ENCODE measurements at regions of chr22 and their contacts with region 1.

Region 1: DNA sequence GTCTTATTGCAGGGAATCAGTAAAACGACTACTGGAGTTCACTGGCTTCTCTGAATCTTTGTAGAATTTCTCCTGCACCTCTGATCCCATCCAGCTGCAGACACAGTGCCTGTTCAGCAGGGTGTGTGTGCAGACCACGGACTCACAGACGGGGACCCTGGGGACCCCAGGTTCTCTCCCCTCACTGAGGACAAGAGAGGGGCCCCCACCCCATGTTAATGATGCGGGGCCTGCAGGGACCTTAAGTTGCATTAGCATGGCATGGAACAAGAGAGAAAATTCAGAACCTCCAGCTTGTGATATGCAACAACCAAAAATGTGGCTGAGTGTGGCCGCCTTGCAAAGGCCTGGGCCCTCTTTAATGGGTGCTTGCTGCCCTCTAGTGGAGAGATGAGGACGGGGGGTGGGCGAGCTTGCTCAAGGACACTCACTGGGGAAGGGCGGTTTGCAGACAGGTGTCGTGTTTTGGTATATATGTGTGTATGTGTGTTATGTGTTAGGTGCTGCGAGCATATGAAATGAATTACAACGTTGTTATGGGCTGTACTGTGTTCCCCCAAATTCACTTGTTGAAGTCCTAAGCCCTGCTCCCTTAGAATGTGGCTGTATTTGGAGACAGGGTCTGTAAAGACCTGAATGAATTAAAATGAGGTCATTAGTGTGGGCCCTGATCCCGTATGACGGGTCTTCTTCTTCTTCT is 84.4 kb upstream of the SEPTIN5 start:
- DNase-seq: peak; percentile 74
- ATAC-seq: peak; percentile 94
- H3K4me3 Mint-ChIP-seq: no peak overlapping the region
- H3K27ac Mint-ChIP-seq: no peak overlapping the region
- H3K4me1 Mint-ChIP-seq: no peaks in the 10 kb centered on the region
- H3K27me3 Mint-ChIP-seq: peaks cover 24% of the 10 kb centered on the region
- CTCF ChIP-seq: peak; percentile 78

Region 2: GRCh38 chr22:18987765-18988164 is 642.1 kb before region 1 on chr22:
- CTCF ChIA-PET with region 1: no interaction called
- POLR2A ChIA-PET with region 1: no interaction called
- intact Hi-C with region 1: no loop called
- DNase-seq: no peak
- ATAC-seq: no peak
- H3K4me3 Mint-ChIP-seq: no peak overlapping the region
- H3K27ac Mint-ChIP-seq: no peak overlapping the region
- H3K4me1 Mint-ChIP-seq: no peaks in the 10 kb centered on the region
- H3K27me3 Mint-ChIP-seq: peaks cover 8% of the 10 kb centered on the region
- CTCF ChIP-seq: no peak

Region 3: GRCh38 chr22:19109198-19110067 is 520.4 kb before region 1 on chr22:
- CTCF ChIA-PET with region 1: no interaction called
- POLR2A ChIA-PET with region 1: no interaction called
- intact Hi-C with region 1: loop called (anchors 1 kb)
- DNase-seq: no peak
- ATAC-seq: peak; percentile 95
- H3K4me3 Mint-ChIP-seq: peak overlapping the region; percentile 67
- H3K27ac Mint-ChIP-seq: peak overlapping the region; percentile 85
- H3K4me1 Mint-ChIP-seq: peaks cover 60% of the 10 kb centered on the region
- H3K27me3 Mint-ChIP-seq: no peaks in the 10 kb centered on the region
- CTCF ChIP-seq: no peak

Region 4: DNA sequence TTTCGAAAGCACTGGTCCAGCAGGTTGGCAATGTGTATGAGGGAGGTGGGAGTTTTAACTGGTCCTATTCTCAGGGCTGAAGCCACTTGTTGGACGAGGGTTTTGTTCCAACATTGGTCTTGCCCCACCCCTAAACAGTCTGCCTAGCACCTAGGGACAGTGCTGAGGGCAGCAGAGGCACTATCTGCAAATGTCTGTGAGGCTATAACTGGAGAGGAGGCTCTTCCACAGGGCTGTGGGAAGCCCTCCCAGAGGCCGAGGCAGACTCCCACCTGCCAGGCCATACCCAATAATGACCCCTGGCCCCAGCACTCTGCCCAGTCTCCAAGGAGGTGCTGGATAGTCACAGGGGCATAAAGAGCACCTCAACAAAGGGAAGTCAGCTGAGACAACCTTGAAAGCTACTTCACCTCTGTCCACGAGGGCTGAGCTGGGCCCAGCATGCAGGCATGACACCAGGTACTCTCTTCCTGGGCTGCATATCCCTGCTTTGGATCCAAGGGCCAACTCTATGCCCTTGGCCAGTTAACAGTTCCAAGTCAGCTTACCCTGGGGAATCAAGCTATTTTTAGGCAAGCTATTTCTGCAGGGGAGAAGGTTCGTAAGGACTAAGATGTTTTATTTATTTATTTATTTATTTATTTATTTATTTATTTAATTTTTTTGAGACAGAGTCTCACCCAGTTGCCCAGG is 411.2 kb before region 1 on chr22:
- CTCF ChIA-PET with region 1: interaction called, 18 read pairs
- POLR2A ChIA-PET with region 1: no interaction called
- intact Hi-C with region 1: loop called (anchors 1 kb)
- DNase-seq: no peak
- ATAC-seq: no peak
- H3K4me3 Mint-ChIP-seq: no peak overlapping the region
- H3K27ac Mint-ChIP-seq: no peak overlapping the region
- H3K4me1 Mint-ChIP-seq: peaks cover 4% of the 10 kb centered on the region
- H3K27me3 Mint-ChIP-seq: peaks cover 2% of the 10 kb centered on the region
- CTCF ChIP-seq: no peak

Region 5: GRCh38 chr22:19271856-19272535 is 357.9 kb before region 1 on chr22:
- CTCF ChIA-PET with region 1: no interaction called
- POLR2A ChIA-PET with region 1: no interaction called
- intact Hi-C with region 1: loop called (anchors 1 kb)
- DNase-seq: no peak
- ATAC-seq: no peak
- H3K4me3 Mint-ChIP-seq: no peak overlapping the region
- H3K27ac Mint-ChIP-seq: no peak overlapping the region
- H3K4me1 Mint-ChIP-seq: no peaks in the 10 kb centered on the region
- H3K27me3 Mint-ChIP-seq: peaks cover 3% of the 10 kb centered on the region
- CTCF ChIP-seq: no peak

Region 6: GRCh38 chr22:19394274-19395050 is 235.4 kb before region 1 on chr22:
- CTCF ChIA-PET with region 1: interaction called, 5 read pairs
- POLR2A ChIA-PET with region 1: no interaction called
- intact Hi-C with region 1: loop called (anchors 5 kb)
- DNase-seq: no peak
- ATAC-seq: no peak
- H3K4me3 Mint-ChIP-seq: no peak overlapping the region
- H3K27ac Mint-ChIP-seq: no peak overlapping the region
- H3K4me1 Mint-ChIP-seq: no peaks in the 10 kb centered on the region
- H3K27me3 Mint-ChIP-seq: no peaks in the 10 kb centered on the region
- CTCF ChIP-seq: no peak

Region 7: GRCh38 chr22:19432133-19432851 is 197.6 kb before region 1 on chr22 and contains the start of gene MRPL40:
- CTCF ChIA-PET with region 1: no interaction called
- POLR2A ChIA-PET with region 1: interaction called, 6 read pairs
- intact Hi-C with region 1: loop called (anchors 5 kb)
- DNase-seq: peak; percentile 83
- ATAC-seq: peak; percentile 87
- H3K4me3 Mint-ChIP-seq: peak within 1 kb of the TSS; percentile 90
- H3K27ac Mint-ChIP-seq: peak within 1 kb of the TSS; percentile 91
- H3K4me1 Mint-ChIP-seq: peaks cover 59% of the 10 kb centered on the region
- H3K27me3 Mint-ChIP-seq: no peaks in the 10 kb centered on the region
- CTCF ChIP-seq: no peak
- total RNA-seq, gene MRPL40: 24.0 and 24.3 TPM in 2 replicates

Region 8: DNA sequence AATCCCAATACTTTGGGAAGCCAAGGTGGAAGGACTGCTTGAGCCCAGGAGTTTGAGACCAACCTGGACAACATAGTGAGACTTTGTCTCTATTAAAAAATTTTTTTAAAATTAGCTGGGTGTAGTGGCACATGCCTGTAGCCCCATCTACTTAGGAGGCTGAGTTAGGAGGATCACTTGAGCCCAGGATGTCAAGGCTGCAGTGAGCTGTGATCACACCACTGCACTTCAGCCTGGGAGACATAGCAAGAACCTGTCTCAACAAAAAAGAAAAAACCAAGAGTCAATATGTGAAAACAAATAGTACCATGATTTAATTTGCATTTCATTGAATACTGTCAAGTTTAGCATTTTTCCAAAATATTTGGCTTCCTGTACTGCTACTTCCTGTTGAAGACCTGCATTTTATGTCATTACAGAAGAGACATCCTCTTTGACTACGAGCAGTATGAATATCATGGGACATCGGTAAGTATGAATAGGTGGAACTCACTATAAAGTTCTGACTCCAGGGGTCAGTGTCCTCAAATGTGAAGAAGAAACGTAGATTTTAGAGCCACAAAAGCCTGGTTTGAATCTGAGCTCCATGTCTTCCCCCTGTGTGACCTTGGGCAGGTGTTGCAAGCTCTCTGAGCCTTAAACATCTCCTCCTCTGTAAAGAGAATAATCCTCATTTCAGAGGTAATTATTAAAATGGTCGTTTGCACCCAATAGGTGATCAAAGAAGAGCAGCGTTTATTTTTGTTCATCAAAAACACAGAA is 134.1 kb before region 1 on chr22:
- CTCF ChIA-PET with region 1: interaction called, 10 read pairs
- POLR2A ChIA-PET with region 1: no interaction called
- intact Hi-C with region 1: loop called (anchors 1 kb)
- DNase-seq: no peak
- ATAC-seq: no peak
- H3K4me3 Mint-ChIP-seq: no peak overlapping the region
- H3K27ac Mint-ChIP-seq: no peak overlapping the region
- H3K4me1 Mint-ChIP-seq: no peaks in the 10 kb centered on the region
- H3K27me3 Mint-ChIP-seq: no peaks in the 10 kb centered on the region
- CTCF ChIP-seq: no peak